ENCODE measurements at regions of chr1 and their contacts with region 1.

Region 1: GRCh38 chr1:171226747-171227370 is 21.4 kb upstream of the FMO1 start:
- DNase-seq: peak in 4 of 5 donors; percentile 34 to 49 (median 40)
- ATAC-seq: peak in 3 of 4 donors; percentile 76 to 81 (median 78)
- H3K4me3 ChIP-seq: no peak overlapping the region
- H3K27ac ChIP-seq: no peak overlapping the region
- H3K4me1 ChIP-seq: peaks cover 0 to 25% (median 12%) of the 10 kb centered on the region in 12 donors
- H3K27me3 ChIP-seq: no peaks in the 10 kb centered on the region
- CTCF ChIP-seq: peak; percentile 75 to 94 (median 82)
- POLR2A ChIP-seq: no peak

Region 2: DNA sequence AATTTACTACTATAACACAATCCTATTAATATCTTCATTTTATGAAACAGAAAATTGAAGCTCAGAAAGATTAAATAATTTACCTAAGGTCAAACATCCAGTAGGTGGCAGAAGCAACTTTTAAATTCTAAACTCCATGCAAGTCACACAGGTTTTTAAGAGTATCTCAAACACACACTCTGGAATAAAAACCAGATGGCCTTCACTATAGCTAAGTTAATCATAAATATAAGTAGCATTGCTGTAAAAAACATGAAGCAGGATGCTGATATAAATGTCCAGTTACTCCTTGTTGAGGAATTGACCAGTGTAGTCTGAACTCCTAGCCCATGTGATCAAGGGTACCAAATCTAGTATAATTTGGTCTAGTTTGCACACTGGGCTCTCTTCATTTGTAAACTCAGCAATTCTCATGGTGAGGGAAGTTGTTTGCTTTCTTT is 145.5 kb before region 1 on chr1:
- intact Hi-C with region 1: loop called (anchors 1 to 5 kb)
- DNase-seq: no peak
- ATAC-seq: peak in 2 of 4 donors; percentile 46 to 50
- H3K4me3 ChIP-seq: peak overlapping the region in 1 of 12 donors; percentile 4
- H3K27ac ChIP-seq: peak overlapping the region in 9 of 12 donors; percentile 13 to 76 (median 51)
- H3K4me1 ChIP-seq: peaks cover 0 to 29% (median 9%) of the 10 kb centered on the region in 12 donors
- H3K27me3 ChIP-seq: no peaks in the 10 kb centered on the region
- CTCF ChIP-seq: peak; percentile 36 to 71 (median 62)
- POLR2A ChIP-seq: no peak

Region 3: GRCh38 chr1:171107262-171107940 is 119.5 kb before region 1 on chr1:
- intact Hi-C with region 1: no loop called
- DNase-seq: no peak
- ATAC-seq: peak in 2 of 4 donors; percentile 43 to 58
- H3K4me3 ChIP-seq: no peak overlapping the region
- H3K27ac ChIP-seq: peak overlapping the region in 4 of 12 donors; percentile 16 to 63 (median 26)
- H3K4me1 ChIP-seq: peaks cover 0 to 29% (median 5%) of the 10 kb centered on the region in 12 donors
- H3K27me3 ChIP-seq: no peaks in the 10 kb centered on the region
- CTCF ChIP-seq: peak in 9 of 12 donors; percentile 6 to 52 (median 38)
- POLR2A ChIP-seq: no peak

Measured in heart left ventricle (tissue), 16 donors.